ENCODE measurements at regions of chr9 and their contacts with region 1.

Region 1: GRCh38 chr9:128412120-128412790 is 8.4 kb upstream of the CERCAM start:
- DNase-seq: peak in 1 of 3 donors; percentile 52
- ATAC-seq: peak in 1 of 2 donors; percentile 28
- H3K4me3 ChIP-seq: no peak overlapping the region
- H3K27ac ChIP-seq: no peak overlapping the region
- H3K4me1 ChIP-seq: no peaks in the 10 kb centered on the region
- H3K27me3 ChIP-seq: no peaks in the 10 kb centered on the region

Region 2: GRCh38 chr9:128361986-128362646 is 50.1 kb before region 1 on chr9:
- intact Hi-C with region 1: loop called in 3 of 4 experiments (anchors 5 to 10 kb)
- DNase-seq: peak; percentile 85 to 94 (median 90)
- ATAC-seq: peak; percentile 89 to 90
- H3K4me3 ChIP-seq: peak overlapping the region; percentile 5
- H3K27ac ChIP-seq: peak overlapping the region; percentile 34
- H3K4me1 ChIP-seq: no peaks in the 10 kb centered on the region
- H3K27me3 ChIP-seq: no peaks in the 10 kb centered on the region

Measured in right cardiac atrium (tissue), 5 donors.